AG04450 (cell line): ENCODE measurements at regions of chr4 and their contacts with region 1.

Region 1: GRCh38 chr4:70704331-70705145 is 16.2 kb downstream of the UTP3 start:
- DNase-seq: no peak
- H3K4me3 ChIP-seq: peak overlapping the region; percentile 77
- H3K27ac ChIP-seq: peak overlapping the region; percentile 97
- H3K27me3 ChIP-seq: no peaks in the 10 kb centered on the region
- CTCF ChIP-seq: peak; percentile 40

Region 2: GRCh38 chr4:70687821-70688794 is 16.4 kb before region 1 on chr4 and contains the start of gene UTP3:
- CTCF ChIA-PET with region 1: interaction called, 30 read pairs
- POLR2A ChIA-PET with region 1: interaction called, 5 read pairs
- DNase-seq: peak; percentile 98
- H3K4me3 ChIP-seq: peak within 1 kb of the TSS; percentile 100
- H3K27ac ChIP-seq: peak within 1 kb of the TSS; percentile 95
- H3K27me3 ChIP-seq: no peaks in the 10 kb centered on the region
- CTCF ChIP-seq: peak; percentile 97
- polyA plus RNA-seq, gene UTP3: 24.3 and 27.1 TPM in 2 replicates

Region 3: GRCh38 chr4:70721747-70722146 is 17.2 kb after region 1 on chr4 and contains the start of gene RUFY3:
- CTCF ChIA-PET with region 1: interaction called, 12 read pairs
- POLR2A ChIA-PET with region 1: interaction called, 13 read pairs
- DNase-seq: peak; percentile 91
- H3K4me3 ChIP-seq: peak within 1 kb of the TSS; percentile 85
- H3K27ac ChIP-seq: peak within 1 kb of the TSS; percentile 90
- H3K27me3 ChIP-seq: no peaks in the 10 kb centered on the region
- CTCF ChIP-seq: no peak
- polyA plus RNA-seq, gene RUFY3: 39.1 and 57.9 TPM in 2 replicates

Region 4: GRCh38 chr4:70842761-70843435 is 138.4 kb after region 1 on chr4:
- CTCF ChIA-PET with region 1: no interaction called
- POLR2A ChIA-PET with region 1: no interaction called
- DNase-seq: no peak
- H3K4me3 ChIP-seq: no peak overlapping the region
- H3K27ac ChIP-seq: no peak overlapping the region
- H3K27me3 ChIP-seq: no peaks in the 10 kb centered on the region
- CTCF ChIP-seq: no peak